Ovary (tissue), 10 donors: ENCODE measurements at regions of chr20 and their contacts with region 1.

Region 1: GRCh38 chr20:62793912-62794724 is 2.2 kb upstream of the MRGBP start:
- DNase-seq: peak; percentile 97 to 99 (median 98)
- H3K4me3 ChIP-seq: peak overlapping the region; percentile 78
- H3K27ac ChIP-seq: peak overlapping the region; percentile 92
- H3K4me1 ChIP-seq: peaks cover 7% of the 10 kb centered on the region
- H3K27me3 ChIP-seq: no peaks in the 10 kb centered on the region
- CTCF ChIP-seq: peak in 1 of 3 donors; percentile 17
- EP300 ChIP-seq: no peak
- POLR2A ChIP-seq: peak; percentile 94

Region 2: GRCh38 chr20:62500237-62500864 is 293.8 kb before region 1 on chr20:
- intact Hi-C with region 1: loop called (anchors 5 to 10 kb)
- DNase-seq: peak; percentile 66 to 84 (median 81)
- H3K4me3 ChIP-seq: no peak overlapping the region
- H3K27ac ChIP-seq: no peak overlapping the region
- H3K4me1 ChIP-seq: no peaks in the 10 kb centered on the region
- H3K27me3 ChIP-seq: no peaks in the 10 kb centered on the region
- CTCF ChIP-seq: peak; percentile 43 to 84 (median 74)
- EP300 ChIP-seq: no peak
- POLR2A ChIP-seq: no peak

Region 3: DNA sequence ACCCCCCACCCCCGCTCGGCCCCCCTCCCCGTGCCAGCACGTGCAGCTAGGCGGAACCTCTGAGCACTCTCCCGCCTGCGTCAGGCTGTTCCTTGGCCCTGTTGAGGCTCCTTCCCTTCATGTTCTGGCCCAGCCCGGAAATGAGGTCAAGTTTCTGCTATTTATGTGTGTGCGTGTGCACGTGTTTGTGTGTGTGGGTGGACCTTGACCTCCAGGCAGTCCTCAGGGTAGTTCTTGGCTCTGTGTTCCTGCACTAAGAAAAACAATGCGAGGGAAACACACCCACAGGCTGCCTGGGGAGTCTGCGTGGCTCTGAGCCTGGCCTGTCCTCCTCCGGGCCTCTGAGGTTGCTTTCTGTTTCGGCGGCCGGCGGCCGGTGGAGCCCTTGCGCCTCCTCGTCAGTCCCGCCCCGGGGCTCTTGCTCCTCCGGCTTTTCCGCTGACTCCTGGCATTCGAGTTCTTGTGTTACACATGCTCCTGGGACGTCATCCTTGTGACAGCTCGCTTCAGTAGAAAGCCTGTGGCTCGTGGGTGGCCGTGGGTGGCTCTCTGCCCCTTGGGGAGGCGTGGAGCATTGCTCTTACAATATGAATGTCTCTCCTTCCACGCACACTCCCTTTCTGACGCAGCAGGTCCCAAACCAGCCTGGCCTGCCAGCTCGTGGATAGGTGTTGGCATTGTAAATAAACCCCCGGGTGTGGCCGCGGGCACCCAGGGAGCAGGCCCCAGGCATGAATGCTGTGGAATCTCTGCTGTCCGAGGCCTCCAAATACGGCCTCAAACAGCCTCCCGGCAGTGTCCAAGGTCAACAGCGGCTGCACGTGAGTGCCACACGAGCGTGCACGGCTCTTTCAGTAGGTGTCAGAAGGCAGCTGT is 141.8 kb before region 1 on chr20:
- intact Hi-C with region 1: loop called in 1 of 4 experiments (anchors 5 kb)
- DNase-seq: peak; percentile 93 to 96 (median 95)
- H3K4me3 ChIP-seq: peak overlapping the region; percentile 32
- H3K27ac ChIP-seq: peak overlapping the region; percentile 94 to 96
- H3K4me1 ChIP-seq: peaks cover 31% of the 10 kb centered on the region
- H3K27me3 ChIP-seq: no peaks in the 10 kb centered on the region
- CTCF ChIP-seq: peak in 1 of 3 donors; percentile 26
- EP300 ChIP-seq: peak; percentile 97
- POLR2A ChIP-seq: peak; percentile 53

Region 4: DNA sequence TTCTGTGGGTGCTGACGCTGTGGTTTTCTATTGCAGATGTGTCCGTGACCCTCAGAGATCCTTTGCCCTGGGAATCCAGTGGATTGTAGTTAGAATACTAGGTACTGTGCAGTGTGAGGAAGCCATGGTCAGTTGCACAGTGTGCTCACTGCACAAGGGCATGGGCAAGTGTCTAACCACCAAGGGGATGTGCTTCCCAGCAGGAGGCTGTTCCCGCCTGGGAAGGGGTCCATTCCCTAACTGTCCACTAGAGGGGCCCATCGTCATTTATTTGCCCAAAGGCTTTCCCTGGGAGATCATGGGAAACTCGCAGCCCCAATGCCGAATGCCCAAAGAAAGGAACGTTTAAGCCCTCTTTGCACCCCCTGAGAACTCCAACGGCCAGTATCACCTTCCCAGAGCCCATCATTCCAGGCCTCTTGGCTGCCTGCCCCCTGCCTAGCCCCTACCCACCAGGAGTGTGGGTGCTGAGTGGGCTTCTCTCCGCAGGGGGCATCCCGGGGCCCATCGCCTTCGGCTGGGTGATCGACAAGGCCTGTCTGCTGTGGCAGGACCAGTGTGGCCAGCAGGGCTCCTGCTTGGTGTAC is 125.6 kb before region 1 on chr20:
- intact Hi-C with region 1: loop called (anchors 2 to 5 kb)
- DNase-seq: peak; percentile 60 to 83 (median 78)
- H3K4me3 ChIP-seq: no peak overlapping the region
- H3K27ac ChIP-seq: no peak overlapping the region
- H3K4me1 ChIP-seq: no peaks in the 10 kb centered on the region
- H3K27me3 ChIP-seq: no peaks in the 10 kb centered on the region
- CTCF ChIP-seq: peak; percentile 55 to 79 (median 78)
- EP300 ChIP-seq: no peak
- POLR2A ChIP-seq: no peak

Region 5: DNA sequence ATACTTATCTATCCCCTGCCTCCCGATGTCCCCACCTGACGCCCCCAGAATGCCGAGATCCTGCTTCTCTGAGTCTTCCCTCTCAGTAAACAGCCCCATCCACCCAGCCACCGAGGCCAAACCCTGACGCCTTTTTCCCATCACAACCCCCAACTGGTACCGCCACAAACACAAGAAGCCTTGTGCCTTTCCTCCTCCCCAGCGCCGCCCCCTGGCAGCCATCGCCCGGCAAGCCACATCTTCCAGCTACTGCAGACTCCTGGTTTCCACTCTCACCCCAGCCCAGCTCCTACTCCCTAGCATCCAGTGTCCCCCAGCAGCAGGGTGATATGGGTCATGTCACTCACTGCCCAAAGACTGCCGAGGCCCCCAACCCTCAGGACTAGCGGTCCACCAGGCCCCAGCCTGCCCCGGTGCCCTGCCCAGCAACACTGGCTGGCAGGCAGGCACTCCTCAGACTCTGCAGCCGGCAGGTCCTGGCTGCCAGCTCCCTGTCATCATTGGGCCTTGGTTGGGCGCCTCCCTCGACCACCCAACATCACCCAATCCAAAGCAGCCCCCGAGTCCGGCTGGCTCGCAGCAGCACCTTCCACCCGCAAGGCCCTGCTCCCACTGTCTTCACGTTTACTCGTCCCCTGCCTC is 56.3 kb after region 1 on chr20:
- intact Hi-C with region 1: no loop called
- DNase-seq: peak in 1 of 5 donors; percentile 31
- H3K4me3 ChIP-seq: no peak overlapping the region
- H3K27ac ChIP-seq: no peak overlapping the region
- H3K4me1 ChIP-seq: no peaks in the 10 kb centered on the region
- H3K27me3 ChIP-seq: no peaks in the 10 kb centered on the region
- CTCF ChIP-seq: no peak
- EP300 ChIP-seq: no peak
- POLR2A ChIP-seq: no peak